CD4-positive, alpha-beta T cell (primary cell): ENCODE measurements at regions of chr6 and their contacts with region 1.

Region 1: DNA sequence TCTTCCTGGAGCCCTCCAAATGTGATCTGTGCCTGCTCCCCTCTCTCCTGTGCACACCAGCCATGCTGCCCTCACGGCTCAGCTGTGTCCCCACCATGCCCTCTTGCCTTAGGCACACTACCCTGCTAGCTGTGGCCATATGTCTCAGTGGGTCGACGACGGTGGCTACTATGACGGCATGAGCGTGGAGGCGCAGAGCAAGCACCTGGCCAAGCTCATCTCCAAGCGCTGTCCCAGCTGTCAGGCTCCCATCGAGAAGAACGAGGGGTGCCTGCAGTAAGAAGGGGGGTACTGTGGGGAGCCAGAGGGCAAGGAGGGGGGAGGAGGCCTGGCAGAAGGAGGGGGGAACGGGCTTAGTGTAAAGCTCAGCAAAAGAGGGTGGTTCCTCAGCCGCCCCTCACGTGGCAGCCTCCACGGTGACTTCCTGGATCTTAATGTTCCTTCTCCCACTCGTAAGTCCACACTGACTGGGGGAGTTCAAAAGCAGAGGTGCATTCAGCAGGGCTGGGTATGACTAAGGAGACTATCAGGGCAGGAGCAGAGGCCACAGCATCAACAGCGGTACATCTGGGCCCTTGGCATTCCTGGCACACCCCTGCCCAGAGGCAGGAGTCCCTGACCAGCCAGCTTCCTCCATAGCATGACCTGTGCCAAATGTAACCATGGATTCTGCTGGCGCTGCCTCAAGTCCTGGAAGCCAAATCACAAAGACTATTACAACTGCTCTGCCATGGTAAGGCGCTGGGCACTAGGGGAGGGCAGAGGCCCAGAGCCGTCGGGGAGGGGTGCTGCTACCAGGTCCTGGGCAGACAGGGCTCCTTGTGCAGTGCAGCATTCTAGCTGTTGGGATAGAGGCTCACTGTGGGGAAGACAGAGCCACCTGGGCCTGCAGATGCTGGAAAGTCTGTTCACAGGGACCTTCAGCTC is 8.0 kb downstream of the DNPH1 start:
- DNase-seq: peak in 1 of 14 experiments; percentile 28
- ATAC-seq: no peak
- H3K4me3 ChIP-seq: no peak overlapping the region
- H3K4me3 Mint-ChIP-seq: no peak overlapping the region
- H3K27ac ChIP-seq: peak overlapping the region in 1 of 2 donors; percentile 29
- H3K27ac Mint-ChIP-seq: peak overlapping the region; percentile 100
- H3K4me1 ChIP-seq: peaks cover 56% of the 10 kb centered on the region
- H3K4me1 Mint-ChIP-seq: peaks cover 54% of the 10 kb centered on the region
- H3K27me3 ChIP-seq: no peaks in the 10 kb centered on the region
- H3K27me3 Mint-ChIP-seq: no peaks in the 10 kb centered on the region
- CTCF ChIP-seq: no peak

Region 2: DNA sequence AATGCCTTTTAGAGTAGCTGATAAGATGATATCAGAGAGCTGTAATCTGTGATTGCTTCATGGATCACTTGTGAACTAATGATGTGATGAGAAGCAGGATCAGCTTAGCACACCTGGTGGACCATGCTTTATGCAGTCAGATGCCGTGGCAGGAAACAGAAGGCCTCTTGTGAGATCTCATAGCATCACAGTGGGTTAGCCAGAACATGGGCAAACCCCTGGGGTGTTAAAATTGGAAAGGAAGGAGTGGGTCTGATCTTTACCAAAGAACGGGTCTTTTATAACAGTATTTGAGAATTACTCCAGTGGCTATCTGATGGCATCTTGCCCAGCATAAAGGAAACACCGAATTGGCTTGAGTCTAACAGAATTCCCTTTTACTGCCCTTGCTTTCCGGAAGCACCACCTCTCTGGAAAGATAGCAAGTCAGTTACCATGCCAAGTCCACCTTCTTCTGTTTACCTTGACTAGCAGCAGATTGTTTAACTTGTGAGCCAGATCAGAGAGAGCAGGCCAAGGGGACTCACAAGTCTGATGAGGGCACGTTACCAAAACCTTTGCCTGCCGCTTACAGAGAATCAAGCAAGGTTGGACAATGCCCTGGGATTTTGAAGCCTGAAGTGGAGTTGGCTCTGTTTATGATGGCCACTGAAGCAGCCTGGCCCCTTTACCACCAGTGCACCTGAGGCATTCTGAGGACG is 71.1 kb before region 1 on chr6:
- CTCF ChIA-PET with region 1: no interaction called
- POLR2A ChIA-PET with region 1: no interaction called
- intact Hi-C with region 1: no loop called
- DNase-seq: no peak
- ATAC-seq: no peak
- H3K4me3 ChIP-seq: no peak overlapping the region
- H3K4me3 Mint-ChIP-seq: no peak overlapping the region
- H3K27ac ChIP-seq: no peak overlapping the region
- H3K27ac Mint-ChIP-seq: no peak overlapping the region
- H3K4me1 ChIP-seq: no peaks in the 10 kb centered on the region
- H3K4me1 Mint-ChIP-seq: no peaks in the 10 kb centered on the region
- H3K27me3 ChIP-seq: peaks cover 0 to 2% of the 10 kb centered on the region in 2 experiments
- H3K27me3 Mint-ChIP-seq: no peaks in the 10 kb centered on the region
- CTCF ChIP-seq: no peak

Region 3: DNA sequence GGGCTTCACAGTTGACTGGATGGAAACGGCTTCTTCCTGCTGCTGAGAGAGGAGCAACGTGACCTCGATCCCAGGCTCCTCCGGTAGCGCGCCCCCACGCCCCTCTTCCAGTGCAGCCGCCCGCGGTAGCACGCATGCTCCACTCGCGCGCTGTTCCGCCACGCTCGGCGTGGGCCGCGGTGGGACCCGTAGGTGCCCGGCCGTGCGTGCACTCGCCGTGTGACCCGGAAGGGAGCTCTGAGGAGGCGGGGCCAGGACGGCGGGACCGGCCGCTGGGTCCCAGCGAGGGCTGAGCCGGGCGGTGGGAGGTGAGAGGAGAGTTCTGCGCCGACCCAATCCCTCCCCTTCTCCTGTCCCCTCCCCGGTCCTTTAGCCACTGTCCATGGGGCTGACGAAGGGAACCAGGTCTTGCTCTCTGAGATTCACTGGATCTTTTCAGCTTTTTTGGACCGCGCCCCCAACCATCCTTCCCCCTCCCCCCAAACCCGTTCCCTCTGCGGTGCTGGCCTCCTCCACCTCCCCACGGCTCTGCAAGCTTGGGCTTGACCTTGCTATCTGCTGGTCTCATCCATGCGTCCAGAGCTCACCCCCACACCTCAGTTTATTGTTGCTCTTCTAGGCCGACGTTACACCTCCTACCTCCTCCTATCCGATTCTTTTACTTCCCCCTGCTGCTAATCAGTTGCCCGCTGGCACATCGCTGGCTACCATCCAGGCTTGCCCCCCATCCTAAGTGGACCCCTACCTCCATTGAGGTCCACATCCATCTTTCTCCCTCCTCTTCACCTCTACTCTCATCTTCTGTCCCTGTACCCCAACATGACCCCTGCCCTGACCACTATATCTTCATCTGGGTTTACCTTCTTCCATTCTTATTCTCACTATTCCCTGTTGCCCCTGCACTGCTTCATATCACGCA is 39.1 kb before region 1 on chr6 and contains the start of gene CUL9:
- CTCF ChIA-PET with region 1: no interaction called
- POLR2A ChIA-PET with region 1: interaction called, 4 read pairs
- intact Hi-C with region 1: loop called in 1 of 2 experiments (anchors 5 kb)
- DNase-seq: peak; percentile 45 to 90 (median 74)
- ATAC-seq: peak; percentile 87
- H3K4me3 ChIP-seq: peak within 1 kb of the TSS; percentile 86
- H3K4me3 Mint-ChIP-seq: peak within 1 kb of the TSS; percentile 92
- H3K27ac ChIP-seq: peak within 1 kb of the TSS; percentile 64 to 68
- H3K27ac Mint-ChIP-seq: peak within 1 kb of the TSS; percentile 75
- H3K4me1 ChIP-seq: peaks cover 53% of the 10 kb centered on the region
- H3K4me1 Mint-ChIP-seq: peaks cover 56% of the 10 kb centered on the region
- H3K27me3 ChIP-seq: no peaks in the 10 kb centered on the region
- H3K27me3 Mint-ChIP-seq: no peaks in the 10 kb centered on the region
- CTCF ChIP-seq: no peak
- total RNA-seq, gene CUL9: 75.5 to 79.2 TPM